Activated CD4-positive, alpha-beta memory T cell treated with anti-CD3 and anti-CD28 coated beads for 36 hours (primary cell): ENCODE measurements at regions of chr10 and their contacts with region 1.

Region 1: DNA sequence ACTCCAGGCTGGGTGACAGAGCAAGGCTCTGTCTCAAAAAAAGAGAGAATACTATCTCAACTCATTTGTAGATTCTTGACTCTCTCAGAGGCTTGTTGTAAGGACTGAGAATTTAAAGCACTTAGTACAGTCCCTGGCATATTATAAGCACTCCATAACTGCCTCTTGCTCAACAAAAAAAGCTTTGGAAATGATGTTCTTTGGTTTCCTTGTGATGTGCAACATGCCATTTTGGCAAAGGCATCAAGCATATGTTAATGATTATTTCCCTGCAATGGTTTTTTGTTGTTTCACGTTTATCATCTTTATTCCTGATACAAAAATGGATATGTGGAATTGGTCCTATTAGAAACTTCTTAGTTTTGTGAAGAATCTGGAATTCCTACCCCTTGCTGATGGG is 15.7 kb downstream of the NOLC1 start:
- DNase-seq: no peak
- H3K4me3 Mint-ChIP-seq: no peak overlapping the region
- H3K27ac Mint-ChIP-seq: no peak overlapping the region
- H3K4me1 Mint-ChIP-seq: peaks cover 5% of the 10 kb centered on the region
- H3K27me3 Mint-ChIP-seq: no peaks in the 10 kb centered on the region

Region 2: GRCh38 chr10:102132563-102133372 is 35.1 kb before region 1 on chr10 and contains the start of gene PPRC1:
- CTCF ChIA-PET with region 1: interaction called, 18 read pairs
- POLR2A ChIA-PET with region 1: no interaction called
- intact Hi-C with region 1: loop called (anchors 1 kb)
- DNase-seq: peak; percentile 99
- H3K4me3 Mint-ChIP-seq: peak within 1 kb of the TSS; percentile 100
- H3K27ac Mint-ChIP-seq: peak within 1 kb of the TSS; percentile 98
- H3K4me1 Mint-ChIP-seq: peaks cover 42% of the 10 kb centered on the region
- H3K27me3 Mint-ChIP-seq: no peaks in the 10 kb centered on the region
- total RNA-seq, gene PPRC1: 59.1 to 65.9 TPM

Region 3: DNA sequence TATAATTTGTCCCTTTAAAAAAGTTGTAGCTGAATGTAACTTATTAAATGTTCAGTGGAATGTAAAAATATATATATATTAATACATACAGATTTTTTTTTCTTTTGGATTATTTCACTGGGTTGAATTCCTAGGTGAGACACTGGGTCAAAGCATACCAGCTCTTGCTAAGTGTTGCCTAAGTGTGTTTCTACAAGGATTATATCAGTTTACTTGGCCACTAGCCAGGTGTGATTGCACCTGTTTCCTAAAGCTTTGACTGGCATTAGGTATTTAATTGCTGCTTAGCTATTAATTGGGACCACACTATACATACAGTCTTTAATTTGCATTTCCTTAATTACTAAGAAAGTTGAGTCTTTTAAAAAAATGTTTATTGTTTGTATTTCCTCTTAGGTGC is 52.8 kb after region 1 on chr10:
- CTCF ChIA-PET with region 1: interaction called, 148 read pairs
- POLR2A ChIA-PET with region 1: interaction called, 3 read pairs
- intact Hi-C with region 1: no loop called
- DNase-seq: no peak
- H3K4me3 Mint-ChIP-seq: no peak overlapping the region
- H3K27ac Mint-ChIP-seq: no peak overlapping the region
- H3K4me1 Mint-ChIP-seq: peaks cover 2% of the 10 kb centered on the region
- H3K27me3 Mint-ChIP-seq: peaks cover 7% of the 10 kb centered on the region

Region 4: DNA sequence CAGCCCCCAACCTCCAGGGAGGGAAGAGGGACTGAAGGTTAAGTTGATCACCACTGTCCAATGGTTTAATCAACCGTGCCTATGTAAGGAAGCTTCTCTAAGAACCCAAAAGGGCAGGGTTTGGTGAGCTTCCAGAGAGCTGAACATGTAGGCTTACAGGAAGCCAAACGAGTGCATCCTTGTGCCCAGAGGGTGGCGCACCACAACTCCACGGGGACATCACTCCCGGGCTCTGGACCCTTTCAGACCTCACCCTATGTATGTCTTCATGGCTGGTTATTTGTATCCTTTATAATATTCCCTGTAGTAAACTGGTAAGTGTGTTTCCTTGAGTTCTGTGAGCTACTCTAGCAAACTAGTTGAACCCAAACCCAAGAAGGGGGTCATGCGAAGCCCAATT is 216.2 kb after region 1 on chr10:
- CTCF ChIA-PET with region 1: interaction called, 11 read pairs
- POLR2A ChIA-PET with region 1: no interaction called
- intact Hi-C with region 1: no loop called
- DNase-seq: peak; percentile 37
- H3K4me3 Mint-ChIP-seq: no peak overlapping the region
- H3K27ac Mint-ChIP-seq: no peak overlapping the region
- H3K4me1 Mint-ChIP-seq: peaks cover 4% of the 10 kb centered on the region
- H3K27me3 Mint-ChIP-seq: no peaks in the 10 kb centered on the region

Region 5: DNA sequence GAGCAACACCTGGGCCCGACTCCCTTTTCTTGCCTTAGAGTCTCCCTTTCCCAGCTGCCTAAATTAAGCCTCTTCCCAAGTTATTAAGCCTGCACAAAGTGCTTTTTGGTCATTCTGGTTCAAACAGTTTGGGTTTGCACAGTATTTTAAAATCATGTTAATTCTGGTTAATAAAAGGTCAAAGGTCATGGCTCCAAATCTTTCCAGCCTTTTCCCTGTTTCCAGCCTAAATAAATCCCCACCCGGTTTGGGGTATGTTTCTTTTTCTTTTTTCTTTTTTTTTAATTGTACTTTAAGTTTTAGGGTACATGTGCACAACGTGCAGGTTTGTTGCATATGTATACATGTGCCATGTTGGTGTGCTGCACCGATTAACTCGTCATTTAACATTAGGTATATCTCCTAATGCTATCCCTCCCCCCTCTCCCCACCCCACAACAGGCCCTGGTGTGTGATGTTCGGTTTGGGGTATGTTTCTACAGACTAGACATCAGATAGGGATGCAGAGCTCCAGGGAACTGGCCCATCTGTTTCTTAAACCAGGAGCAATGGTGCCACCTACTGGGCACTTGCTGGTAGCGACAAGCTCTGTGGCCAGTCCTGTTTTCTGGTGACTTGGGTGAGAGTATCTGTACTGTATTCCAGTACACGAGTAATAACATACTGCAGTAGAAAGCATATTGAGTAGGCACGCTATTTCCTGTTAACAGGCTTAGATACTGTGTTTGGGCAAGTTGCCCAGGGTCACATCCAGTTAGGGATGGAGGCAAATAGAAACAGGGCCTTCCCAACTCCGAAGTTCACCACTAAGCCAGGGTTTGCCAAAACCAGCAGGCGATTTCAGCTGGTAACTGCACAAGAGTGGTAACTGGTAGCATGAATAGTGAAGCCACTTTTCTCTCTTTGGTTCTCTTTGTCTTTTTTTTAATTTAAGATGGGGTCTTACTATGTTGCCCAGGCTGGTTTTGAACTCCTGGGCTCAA is 415.9 kb after region 1 on chr10:
- CTCF ChIA-PET with region 1: interaction called, 13 read pairs
- POLR2A ChIA-PET with region 1: interaction called, 3 read pairs
- intact Hi-C with region 1: no loop called
- DNase-seq: peak; percentile 90
- H3K4me3 Mint-ChIP-seq: no peak overlapping the region
- H3K27ac Mint-ChIP-seq: no peak overlapping the region
- H3K4me1 Mint-ChIP-seq: peaks cover 13% of the 10 kb centered on the region
- H3K27me3 Mint-ChIP-seq: no peaks in the 10 kb centered on the region

Region 6: GRCh38 chr10:102691285-102692066 is 523.6 kb after region 1 on chr10:
- CTCF ChIA-PET with region 1: no interaction called
- POLR2A ChIA-PET with region 1: no interaction called
- intact Hi-C with region 1: no loop called
- DNase-seq: no peak
- H3K4me3 Mint-ChIP-seq: no peak overlapping the region
- H3K27ac Mint-ChIP-seq: no peak overlapping the region
- H3K4me1 Mint-ChIP-seq: no peaks in the 10 kb centered on the region
- H3K27me3 Mint-ChIP-seq: no peaks in the 10 kb centered on the region